ENCODE measurements at regions of chr15 and their contacts with region 1.

Region 1: GRCh38 chr15:98779463-98780071 is 131.2 kb downstream of the IGF1R start:
- DNase-seq: peak; percentile 44 to 75 (median 64)
- ATAC-seq: peak; percentile 94
- H3K4me3 ChIP-seq: no peak overlapping the region
- H3K4me3 Mint-ChIP-seq: peak overlapping the region; percentile 43 to 75 (median 64)
- H3K27ac ChIP-seq: no peak overlapping the region
- H3K27ac Mint-ChIP-seq: peak overlapping the region in 4 of 9 donors; percentile 56 to 78 (median 70)
- H3K4me1 ChIP-seq: peaks cover 0 to 21% of the 10 kb centered on the region in 2 donors
- H3K4me1 Mint-ChIP-seq: peaks cover 26 to 80% (median 62%) of the 10 kb centered on the region in 7 donors
- H3K27me3 ChIP-seq: no peaks in the 10 kb centered on the region
- H3K27me3 Mint-ChIP-seq: peaks cover 0 to 3% (median 0%) of the 10 kb centered on the region in 5 donors

Region 2: DNA sequence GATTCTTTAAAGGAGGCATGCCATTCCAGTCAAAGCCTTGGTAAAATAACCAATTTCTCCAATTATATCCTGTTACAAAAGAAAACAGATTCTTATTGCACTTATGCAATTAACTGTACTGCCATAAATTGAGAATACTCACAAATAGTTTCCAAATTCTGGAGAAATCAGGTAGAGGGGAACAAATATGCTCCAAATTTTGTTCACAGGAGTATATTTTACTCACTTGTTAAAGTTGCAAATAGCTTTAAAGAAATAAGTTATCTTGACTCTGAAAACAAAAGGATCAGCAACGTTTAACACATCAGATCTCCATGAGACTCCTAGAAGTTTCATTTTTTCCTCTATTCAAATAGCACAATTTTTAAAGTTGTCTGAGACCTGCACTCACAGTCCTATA is 1531.2 kb before region 1 on chr15:
- CTCF ChIA-PET with region 1: no interaction called
- POLR2A ChIA-PET with region 1: no interaction called
- intact Hi-C with region 1: no loop called
- DNase-seq: no peak
- ATAC-seq: no peak
- H3K4me3 ChIP-seq: no peak overlapping the region
- H3K4me3 Mint-ChIP-seq: no peak overlapping the region
- H3K27ac ChIP-seq: no peak overlapping the region
- H3K27ac Mint-ChIP-seq: no peak overlapping the region
- H3K4me1 ChIP-seq: no peaks in the 10 kb centered on the region
- H3K4me1 Mint-ChIP-seq: no peaks in the 10 kb centered on the region
- H3K27me3 ChIP-seq: no peaks in the 10 kb centered on the region
- H3K27me3 Mint-ChIP-seq: peaks cover 0 to 14% (median 0%) of the 10 kb centered on the region in 5 donors

Region 3: GRCh38 chr15:98442379-98442833 is 337.2 kb before region 1 on chr15:
- CTCF ChIA-PET with region 1: no interaction called
- POLR2A ChIA-PET with region 1: no interaction called
- intact Hi-C with region 1: loop called in 1 of 2 experiments (anchors 1 kb)
- DNase-seq: peak in 8 of 9 donors; percentile 24 to 59 (median 52)
- ATAC-seq: peak; percentile 84
- H3K4me3 ChIP-seq: no peak overlapping the region
- H3K4me3 Mint-ChIP-seq: no peak overlapping the region
- H3K27ac ChIP-seq: no peak overlapping the region
- H3K27ac Mint-ChIP-seq: no peak overlapping the region
- H3K4me1 ChIP-seq: no peaks in the 10 kb centered on the region
- H3K4me1 Mint-ChIP-seq: peaks cover 0 to 5% (median 0%) of the 10 kb centered on the region in 7 donors
- H3K27me3 ChIP-seq: no peaks in the 10 kb centered on the region
- H3K27me3 Mint-ChIP-seq: peaks cover 12 to 28% (median 19%) of the 10 kb centered on the region in 5 donors

Region 4: GRCh38 chr15:98581715-98582114 is 197.9 kb before region 1 on chr15:
- CTCF ChIA-PET with region 1: interaction called, 3 read pairs
- POLR2A ChIA-PET with region 1: no interaction called
- intact Hi-C with region 1: loop called in 1 of 2 experiments (anchors 2 kb)
- DNase-seq: peak in 6 of 9 donors; percentile 18 to 54 (median 40)
- ATAC-seq: peak; percentile 60
- H3K4me3 ChIP-seq: no peak overlapping the region
- H3K4me3 Mint-ChIP-seq: no peak overlapping the region
- H3K27ac ChIP-seq: no peak overlapping the region
- H3K27ac Mint-ChIP-seq: no peak overlapping the region
- H3K4me1 ChIP-seq: peaks cover 0 to 11% of the 10 kb centered on the region in 2 donors
- H3K4me1 Mint-ChIP-seq: peaks cover 4 to 18% (median 13%) of the 10 kb centered on the region in 7 donors
- H3K27me3 ChIP-seq: peaks cover 0 to 3% of the 10 kb centered on the region in 2 donors
- H3K27me3 Mint-ChIP-seq: peaks cover 22 to 58% (median 34%) of the 10 kb centered on the region in 5 donors

Region 5: GRCh38 chr15:98823012-98823458 is 43.5 kb after region 1 on chr15:
- CTCF ChIA-PET with region 1: no interaction called
- POLR2A ChIA-PET with region 1: no interaction called
- intact Hi-C with region 1: no loop called
- DNase-seq: no peak
- ATAC-seq: peak; percentile 57
- H3K4me3 ChIP-seq: no peak overlapping the region
- H3K4me3 Mint-ChIP-seq: no peak overlapping the region
- H3K27ac ChIP-seq: no peak overlapping the region
- H3K27ac Mint-ChIP-seq: no peak overlapping the region
- H3K4me1 ChIP-seq: no peaks in the 10 kb centered on the region
- H3K4me1 Mint-ChIP-seq: peaks cover 0 to 17% (median 6%) of the 10 kb centered on the region in 7 donors
- H3K27me3 ChIP-seq: no peaks in the 10 kb centered on the region
- H3K27me3 Mint-ChIP-seq: no peaks in the 10 kb centered on the region

Region 6: DNA sequence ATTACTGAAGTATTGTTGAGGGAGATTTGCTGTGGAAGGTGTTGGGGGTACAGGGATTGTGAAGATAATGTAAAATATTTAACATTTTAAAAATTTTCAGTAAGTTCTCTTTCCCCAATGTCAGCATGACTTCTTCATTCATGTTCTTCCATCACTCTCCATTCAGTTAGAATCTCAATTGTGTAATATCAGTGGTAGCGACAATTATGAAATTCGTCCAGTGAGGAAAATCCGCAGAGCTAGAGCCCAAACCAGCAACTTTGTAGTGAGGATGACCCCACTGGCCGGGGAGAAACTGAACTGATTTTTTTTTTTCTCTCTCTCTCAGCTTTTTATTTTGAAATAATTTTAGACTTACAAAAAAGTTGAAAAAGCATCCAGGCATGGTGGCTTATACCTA is 56.3 kb after region 1 on chr15:
- CTCF ChIA-PET with region 1: no interaction called
- POLR2A ChIA-PET with region 1: no interaction called
- intact Hi-C with region 1: no loop called
- DNase-seq: no peak
- ATAC-seq: no peak
- H3K4me3 ChIP-seq: no peak overlapping the region
- H3K4me3 Mint-ChIP-seq: no peak overlapping the region
- H3K27ac ChIP-seq: no peak overlapping the region
- H3K27ac Mint-ChIP-seq: no peak overlapping the region
- H3K4me1 ChIP-seq: no peaks in the 10 kb centered on the region
- H3K4me1 Mint-ChIP-seq: peaks cover 0 to 68% (median 32%) of the 10 kb centered on the region in 7 donors
- H3K27me3 ChIP-seq: no peaks in the 10 kb centered on the region
- H3K27me3 Mint-ChIP-seq: no peaks in the 10 kb centered on the region

Region 7: DNA sequence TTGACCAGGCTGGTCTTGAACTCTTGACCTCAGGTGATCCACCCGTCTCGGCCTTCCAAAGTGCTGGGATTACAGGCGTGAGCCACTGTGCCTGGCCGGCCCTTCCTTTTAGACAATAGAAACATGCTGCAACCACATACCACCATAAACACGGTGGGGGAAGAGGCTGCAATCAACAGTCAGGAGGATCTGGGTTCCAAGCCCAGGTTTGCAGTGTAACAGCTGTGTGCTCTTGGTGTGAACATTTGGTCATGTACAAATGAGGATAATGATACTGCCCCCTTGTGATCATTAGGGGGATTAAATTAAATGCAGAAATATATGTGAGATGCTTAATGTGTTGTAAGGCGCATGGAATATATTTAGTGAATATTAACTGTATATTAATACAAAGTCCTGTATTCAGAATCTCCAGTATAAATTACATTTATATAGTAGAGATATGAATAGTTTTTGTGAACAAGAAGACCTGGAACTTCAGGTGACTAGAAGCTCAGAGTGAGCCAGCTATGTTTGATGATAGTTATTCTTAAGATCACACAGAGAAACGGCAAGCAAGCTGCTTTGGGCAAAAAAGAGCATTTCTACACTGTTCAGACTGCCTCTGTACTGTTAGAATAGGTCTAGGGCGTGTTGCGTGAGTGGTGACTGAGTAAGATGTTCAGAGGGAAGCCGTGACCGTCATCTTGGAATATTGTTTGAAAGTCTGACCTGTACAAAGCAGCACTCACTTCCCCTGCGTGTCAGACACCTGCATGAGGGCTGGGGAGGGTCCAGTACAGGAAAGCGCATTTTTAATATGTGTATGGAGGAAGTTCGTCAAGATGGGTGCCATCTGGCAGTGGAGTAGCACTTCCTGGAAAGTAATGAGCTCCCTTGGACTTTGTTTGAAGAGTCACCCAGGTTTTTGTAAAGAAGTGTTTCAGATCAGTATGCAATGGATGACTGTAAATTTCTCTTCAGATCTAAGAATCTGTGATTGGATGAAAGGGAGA is 102.3 kb after region 1 on chr15:
- CTCF ChIA-PET with region 1: interaction called, 12 read pairs
- POLR2A ChIA-PET with region 1: no interaction called
- intact Hi-C with region 1: loop called (anchors 1 kb)
- DNase-seq: peak in 6 of 9 donors; percentile 19 to 52 (median 38)
- ATAC-seq: peak; percentile 72
- H3K4me3 ChIP-seq: no peak overlapping the region
- H3K4me3 Mint-ChIP-seq: peak overlapping the region in 1 of 10 donors; percentile 39
- H3K27ac ChIP-seq: no peak overlapping the region
- H3K27ac Mint-ChIP-seq: peak overlapping the region in 3 of 9 donors; percentile 19 to 74 (median 65)
- H3K4me1 ChIP-seq: peaks cover 0 to 8% of the 10 kb centered on the region in 2 donors
- H3K4me1 Mint-ChIP-seq: peaks cover 6 to 73% (median 54%) of the 10 kb centered on the region in 7 donors
- H3K27me3 ChIP-seq: no peaks in the 10 kb centered on the region
- H3K27me3 Mint-ChIP-seq: no peaks in the 10 kb centered on the region

Region 8: DNA sequence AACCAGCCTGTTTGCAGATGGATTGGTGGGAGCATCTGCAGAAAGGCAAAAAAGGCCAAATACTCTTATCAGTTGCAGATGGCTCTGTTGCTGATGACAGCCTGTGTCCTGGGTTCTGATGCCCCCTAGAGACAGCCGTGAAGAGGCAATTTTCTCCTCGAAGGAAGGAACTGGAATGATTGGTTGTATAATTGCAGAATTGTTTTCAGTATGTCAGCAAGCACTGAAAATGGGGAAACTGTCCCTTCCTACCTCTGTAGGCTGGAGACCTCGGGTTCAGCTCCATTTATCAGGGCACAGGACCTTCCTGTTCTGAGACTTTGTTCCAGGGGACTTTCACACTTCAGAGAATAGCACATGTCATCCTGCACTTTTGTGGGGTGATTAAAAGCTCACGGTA is 125.0 kb after region 1 on chr15:
- CTCF ChIA-PET with region 1: interaction called, 3 read pairs
- POLR2A ChIA-PET with region 1: no interaction called
- intact Hi-C with region 1: loop called in 1 of 2 experiments (anchors 2 kb)
- DNase-seq: peak in 3 of 9 donors; percentile 7 to 12 (median 10)
- ATAC-seq: peak; percentile 49
- H3K4me3 ChIP-seq: no peak overlapping the region
- H3K4me3 Mint-ChIP-seq: no peak overlapping the region
- H3K27ac ChIP-seq: no peak overlapping the region
- H3K27ac Mint-ChIP-seq: no peak overlapping the region
- H3K4me1 ChIP-seq: no peaks in the 10 kb centered on the region
- H3K4me1 Mint-ChIP-seq: peaks cover 4 to 20% (median 10%) of the 10 kb centered on the region in 7 donors
- H3K27me3 ChIP-seq: peaks cover 0 to 3% of the 10 kb centered on the region in 2 donors
- H3K27me3 Mint-ChIP-seq: no peaks in the 10 kb centered on the region

Region 9: DNA sequence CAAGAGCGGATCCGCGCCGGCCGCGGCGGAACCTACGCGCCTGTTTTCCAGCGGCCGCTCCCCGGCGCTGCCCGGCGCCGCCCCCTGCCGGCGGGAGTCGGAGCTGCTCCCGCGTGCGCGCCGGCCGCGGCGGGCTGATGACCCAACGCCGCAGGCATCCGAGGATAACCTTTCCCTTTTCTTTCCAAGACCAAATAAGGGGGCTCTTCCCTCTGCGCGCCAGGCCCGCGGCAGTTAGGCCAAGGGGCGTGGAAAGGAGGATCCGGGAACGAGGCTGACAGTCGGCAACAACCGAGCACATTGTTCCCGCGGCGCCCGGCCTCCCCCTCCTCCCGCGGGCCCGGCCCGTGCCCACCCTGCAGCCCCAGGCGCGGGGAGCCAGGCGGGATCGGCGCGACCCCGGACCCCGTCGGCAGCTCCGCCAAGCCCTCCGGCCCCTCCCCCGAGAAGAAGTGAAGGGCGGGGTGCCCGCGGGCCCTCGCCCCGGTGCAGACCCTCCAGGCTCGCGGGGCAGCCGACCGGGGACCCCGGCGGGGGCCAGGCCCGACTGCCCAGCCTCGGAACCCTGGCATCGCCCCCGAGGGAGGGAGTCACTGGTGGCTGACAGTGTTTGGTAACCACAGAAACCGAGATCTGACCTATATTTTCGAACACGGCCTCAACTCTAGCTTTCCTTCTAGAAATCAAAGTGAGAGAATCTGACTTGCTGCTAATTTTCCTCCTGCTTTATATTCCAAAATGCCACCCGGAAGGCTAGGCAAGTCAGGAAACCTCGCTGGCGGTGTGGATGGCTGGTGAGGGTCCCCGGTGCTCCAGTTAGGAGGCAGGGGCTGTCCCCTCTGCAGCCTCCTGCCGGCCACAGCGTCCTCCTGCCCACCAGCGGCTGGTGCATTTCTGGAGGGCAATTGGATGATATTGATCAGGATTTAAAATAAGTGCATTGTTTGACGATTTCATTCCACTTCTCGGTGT is 279.7 kb after region 1 on chr15:
- CTCF ChIA-PET with region 1: no interaction called
- POLR2A ChIA-PET with region 1: no interaction called
- intact Hi-C with region 1: loop called (anchors 1 to 2 kb)
- DNase-seq: peak in 8 of 9 donors; percentile 14 to 75 (median 50)
- ATAC-seq: peak; percentile 85
- H3K4me3 ChIP-seq: peak overlapping the region; percentile 50
- H3K4me3 Mint-ChIP-seq: peak overlapping the region; percentile 66 to 83 (median 70)
- H3K27ac ChIP-seq: no peak overlapping the region
- H3K27ac Mint-ChIP-seq: no peak overlapping the region
- H3K4me1 ChIP-seq: peaks cover 0 to 3% of the 10 kb centered on the region in 2 donors
- H3K4me1 Mint-ChIP-seq: peaks cover 0 to 14% (median 8%) of the 10 kb centered on the region in 7 donors
- H3K27me3 ChIP-seq: peaks cover 0 to 18% of the 10 kb centered on the region in 2 donors
- H3K27me3 Mint-ChIP-seq: peaks cover 29 to 59% (median 37%) of the 10 kb centered on the region in 5 donors

Region 10: DNA sequence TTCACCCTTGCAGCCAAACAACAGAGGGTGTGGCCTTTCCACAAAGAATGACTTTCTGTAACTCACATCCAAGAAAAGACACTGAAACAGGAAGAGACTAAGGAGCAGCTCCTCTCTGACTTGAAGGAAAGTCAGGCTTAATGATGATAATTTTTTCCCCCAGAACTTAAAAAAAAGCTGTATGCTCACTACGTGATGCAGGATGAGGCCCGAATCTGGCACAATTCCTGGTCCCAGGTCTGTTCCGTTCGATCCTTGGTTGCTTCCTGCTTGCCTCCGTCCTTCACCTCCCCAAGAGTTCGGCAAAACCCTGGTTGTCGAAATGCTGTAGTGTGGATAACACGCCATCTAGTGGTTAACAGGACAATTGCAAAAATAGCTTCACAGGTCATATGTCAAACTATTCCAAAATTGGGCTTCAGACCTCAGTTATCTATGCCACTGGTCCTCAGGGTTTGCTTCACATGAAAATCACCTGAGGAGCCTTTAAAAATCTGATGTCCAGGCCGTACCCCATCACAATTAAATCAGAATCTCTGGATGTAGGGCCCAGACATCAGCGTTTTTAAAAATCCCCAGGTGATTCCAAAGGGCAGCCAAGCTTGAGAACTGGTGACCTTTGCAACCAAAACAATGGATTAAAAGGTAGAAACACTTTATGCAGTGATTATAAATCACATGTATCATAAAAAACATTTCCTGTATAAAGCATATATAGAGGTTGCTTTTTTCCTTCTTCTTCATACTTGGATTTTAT is 297.2 kb after region 1 on chr15:
- CTCF ChIA-PET with region 1: no interaction called
- POLR2A ChIA-PET with region 1: no interaction called
- intact Hi-C with region 1: loop called (anchors 1 kb)
- DNase-seq: peak in 8 of 9 donors; percentile 20 to 65 (median 56)
- ATAC-seq: peak; percentile 89
- H3K4me3 ChIP-seq: peak overlapping the region; percentile 25
- H3K4me3 Mint-ChIP-seq: peak overlapping the region; percentile 73 to 92 (median 83)
- H3K27ac ChIP-seq: no peak overlapping the region
- H3K27ac Mint-ChIP-seq: peak overlapping the region in 4 of 9 donors; percentile 1 to 74 (median 57)
- H3K4me1 ChIP-seq: no peaks in the 10 kb centered on the region
- H3K4me1 Mint-ChIP-seq: peaks cover 0 to 8% (median 4%) of the 10 kb centered on the region in 7 donors
- H3K27me3 ChIP-seq: no peaks in the 10 kb centered on the region
- H3K27me3 Mint-ChIP-seq: peaks cover 7 to 26% (median 23%) of the 10 kb centered on the region in 5 donors

Measured in naive thymus-derived CD4-positive, alpha-beta T cell (primary cell).